ENCODE measurements at regions of chr6 and their contacts with region 1.

Region 1: GRCh38 chr6:30742316-30743098 is at the start of gene FLOT1:
- DNase-seq: peak; percentile 98
- H3K4me3 Mint-ChIP-seq: peak within 1 kb of the TSS; percentile 98
- H3K27ac Mint-ChIP-seq: peak within 1 kb of the TSS; percentile 94
- H3K4me1 Mint-ChIP-seq: peaks cover 60% of the 10 kb centered on the region
- H3K27me3 Mint-ChIP-seq: no peaks in the 10 kb centered on the region
- total RNA-seq, gene FLOT1: 239 and 260 TPM in 2 replicates

Region 2: GRCh38 chr6:30717042-30717844 is 25.3 kb before region 1 on chr6 and contains the start of gene MDC1:
- intact Hi-C with region 1: loop called (anchors 1 kb)
- DNase-seq: peak; percentile 99
- H3K4me3 Mint-ChIP-seq: peak within 1 kb of the TSS; percentile 95
- H3K27ac Mint-ChIP-seq: peak within 1 kb of the TSS; percentile 99
- H3K4me1 Mint-ChIP-seq: peaks cover 45% of the 10 kb centered on the region
- H3K27me3 Mint-ChIP-seq: no peaks in the 10 kb centered on the region
- total RNA-seq, gene MDC1: 93.9 and 97.2 TPM in 2 replicates

Region 3: DNA sequence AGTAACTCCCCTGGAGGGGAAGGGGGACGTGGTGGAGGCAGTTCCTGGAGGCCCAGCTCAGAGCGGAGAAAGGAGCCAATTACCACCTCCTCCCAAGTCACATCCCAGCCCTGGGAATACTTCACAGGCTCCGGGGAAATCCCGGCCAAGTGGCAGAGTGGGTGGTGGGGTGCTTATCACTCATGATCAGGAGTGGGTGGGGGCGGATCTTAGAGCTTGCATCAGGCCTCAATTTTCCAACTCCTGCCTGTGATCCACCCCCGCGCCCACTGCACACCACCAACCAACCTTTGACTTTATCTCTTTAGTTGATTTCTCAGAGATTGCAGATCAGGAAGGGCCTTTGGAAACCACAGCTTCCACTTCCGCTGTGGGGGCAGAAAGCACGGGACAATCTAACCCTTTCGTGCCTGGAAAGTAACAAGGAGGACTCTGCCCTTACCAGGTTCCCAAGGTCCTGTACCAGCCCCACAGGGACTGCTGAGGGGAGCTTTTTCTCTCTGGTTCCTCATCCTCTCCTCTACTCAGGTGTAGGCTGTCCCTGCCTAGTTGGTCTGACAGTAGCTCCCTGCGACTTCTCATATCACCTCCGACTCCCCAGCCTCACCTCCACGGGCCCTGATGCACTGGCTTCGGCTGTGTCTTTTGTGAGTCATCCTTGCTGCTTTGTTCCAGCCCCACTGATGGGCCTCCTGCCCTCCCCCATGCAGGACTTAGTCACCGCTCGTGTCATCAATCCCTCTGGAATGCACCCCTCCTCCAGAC is 26.8 kb after region 1 on chr6:
- intact Hi-C with region 1: loop called (anchors 1 kb)
- DNase-seq: peak; percentile 91
- H3K4me3 Mint-ChIP-seq: peak overlapping the region; percentile 76
- H3K27ac Mint-ChIP-seq: peak overlapping the region; percentile 97
- H3K4me1 Mint-ChIP-seq: peaks cover 75% of the 10 kb centered on the region
- H3K27me3 Mint-ChIP-seq: peaks cover 2% of the 10 kb centered on the region

Region 4: DNA sequence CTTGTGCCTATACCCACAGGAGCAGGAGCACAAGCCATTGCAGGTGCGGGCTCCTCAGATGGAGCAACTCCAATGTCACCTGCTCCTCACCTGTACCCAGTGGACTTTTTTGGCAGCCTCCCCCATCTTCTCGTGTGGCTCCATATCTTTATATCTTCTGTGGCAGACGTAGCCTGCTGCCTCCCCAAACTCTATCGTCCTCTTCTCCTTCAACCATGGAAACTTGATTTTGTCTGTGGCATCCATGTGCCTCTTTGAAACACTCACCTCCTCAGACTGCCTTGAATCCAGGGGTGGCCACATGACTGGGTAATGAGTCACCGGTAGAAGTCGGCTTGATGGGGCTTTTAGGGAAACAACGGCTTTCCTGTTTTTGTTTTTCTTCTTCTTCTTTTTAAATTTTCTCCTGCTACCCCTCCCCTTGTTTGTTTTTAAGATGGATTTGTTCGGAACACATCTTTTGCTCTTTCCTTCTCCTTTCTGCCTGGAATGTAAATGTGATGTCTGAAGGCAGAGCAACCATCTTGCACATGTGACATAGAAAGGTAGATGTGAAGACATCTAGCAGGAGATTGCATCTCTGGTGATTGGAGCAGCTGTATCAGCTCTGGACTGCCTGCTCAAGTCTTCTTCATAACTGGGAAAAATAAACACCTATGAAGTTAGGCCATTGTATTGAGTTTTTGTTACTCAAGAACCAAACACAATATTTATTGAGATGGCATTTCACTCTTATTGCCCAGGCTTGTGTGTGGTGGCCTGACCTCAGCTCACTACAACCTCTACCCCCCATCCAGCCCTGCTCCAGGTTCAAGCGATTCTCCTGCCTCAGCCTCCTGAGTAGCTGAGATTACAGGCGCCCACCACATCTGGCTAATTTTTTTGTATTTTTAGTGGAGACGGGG is 71.9 kb after region 1 on chr6:
- intact Hi-C with region 1: loop called (anchors 1 kb)
- DNase-seq: peak; percentile 85
- H3K4me3 Mint-ChIP-seq: peak overlapping the region; percentile 67
- H3K27ac Mint-ChIP-seq: peak overlapping the region; percentile 98
- H3K4me1 Mint-ChIP-seq: peaks cover 75% of the 10 kb centered on the region
- H3K27me3 Mint-ChIP-seq: peaks cover 2% of the 10 kb centered on the region

Region 5: DNA sequence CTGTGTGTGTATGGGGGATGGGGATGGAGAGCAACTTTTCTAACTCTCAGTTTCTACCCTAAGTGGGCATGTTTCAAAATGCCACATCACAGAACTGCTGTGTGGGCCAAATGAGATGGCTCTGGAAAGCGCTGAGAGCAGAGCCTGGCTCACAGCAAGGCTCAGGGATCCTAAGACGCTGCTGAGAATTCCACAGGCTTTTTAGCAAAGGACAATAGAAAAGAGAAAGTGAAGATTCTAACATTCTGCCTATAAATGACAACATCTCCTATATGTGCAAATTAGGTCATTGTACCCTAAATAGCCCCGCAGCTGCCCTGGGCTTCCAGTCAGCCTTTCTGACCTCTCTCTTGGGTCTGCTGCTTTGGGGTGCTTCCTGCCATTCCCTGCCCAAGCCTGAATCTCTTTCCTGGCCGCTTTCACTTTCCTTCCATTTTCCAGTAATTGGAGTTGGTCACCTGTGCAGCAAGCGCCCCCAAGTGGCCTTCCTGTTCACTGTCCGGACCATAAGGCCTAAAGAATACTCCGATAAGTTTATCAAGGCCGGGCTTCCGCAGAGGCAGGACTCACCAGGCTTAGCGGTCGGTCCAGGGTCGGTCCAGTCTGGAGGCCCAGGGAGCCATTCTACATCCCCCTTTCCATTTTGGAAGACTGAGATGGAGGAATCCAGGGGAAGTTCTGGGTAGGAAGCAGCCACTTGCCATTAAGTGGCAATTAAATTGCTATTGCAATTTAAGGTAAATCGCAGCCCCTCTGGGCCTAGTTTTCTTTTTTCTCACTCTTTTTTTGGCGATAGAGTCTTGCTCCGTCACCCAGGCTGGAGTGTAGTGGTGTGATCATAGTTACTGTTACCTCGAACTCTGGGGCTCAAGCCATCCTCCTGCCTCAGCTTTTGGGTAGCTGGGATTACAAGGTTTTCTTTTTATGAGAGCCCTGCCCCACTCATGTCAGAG is 135.2 kb after region 1 on chr6:
- intact Hi-C with region 1: loop called (anchors 1 kb)
- DNase-seq: peak; percentile 92
- H3K4me3 Mint-ChIP-seq: peak overlapping the region; percentile 76
- H3K27ac Mint-ChIP-seq: peak overlapping the region; percentile 85
- H3K4me1 Mint-ChIP-seq: peaks cover 37% of the 10 kb centered on the region
- H3K27me3 Mint-ChIP-seq: peaks cover 3% of the 10 kb centered on the region

Measured in activated CD4-positive, alpha-beta T cell treated with anti-CD3 and anti-CD28 coated beads, Interleukin-2, amount 10 ng/mL, durations not matched to agents 24 days and 14 days (primary cell).